Sciatic nerve (tissue), 2 donors: ENCODE measurements at regions of chr2 and their contacts with region 1.

Region 1: DNA sequence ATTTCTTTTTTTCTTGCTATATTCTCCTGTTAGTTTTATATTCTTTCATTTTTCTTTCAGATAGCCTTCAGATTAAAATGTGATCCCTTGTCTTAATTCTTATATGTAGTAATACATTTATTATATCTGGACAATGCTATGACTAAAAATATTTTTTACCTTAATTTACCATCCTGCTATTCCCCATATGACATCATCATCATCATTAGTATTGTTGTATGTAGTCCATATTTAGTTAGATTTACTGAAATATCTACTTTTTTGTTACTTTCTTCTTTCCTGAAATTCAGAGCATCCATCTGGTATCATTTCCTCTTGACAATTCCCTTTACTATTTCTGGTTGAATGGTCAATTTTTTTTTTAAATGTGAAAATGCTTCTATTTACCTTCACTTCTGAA is 951.6 kb upstream of the POU3F3 start:
- DNase-seq: no peak
- ATAC-seq: no peak

Region 2: GRCh38 chr2:103235283-103235682 is 667.1 kb before region 1 on chr2:
- intact Hi-C with region 1: loop called (anchors 5 kb)
- DNase-seq: no peak
- ATAC-seq: no peak

Region 3: DNA sequence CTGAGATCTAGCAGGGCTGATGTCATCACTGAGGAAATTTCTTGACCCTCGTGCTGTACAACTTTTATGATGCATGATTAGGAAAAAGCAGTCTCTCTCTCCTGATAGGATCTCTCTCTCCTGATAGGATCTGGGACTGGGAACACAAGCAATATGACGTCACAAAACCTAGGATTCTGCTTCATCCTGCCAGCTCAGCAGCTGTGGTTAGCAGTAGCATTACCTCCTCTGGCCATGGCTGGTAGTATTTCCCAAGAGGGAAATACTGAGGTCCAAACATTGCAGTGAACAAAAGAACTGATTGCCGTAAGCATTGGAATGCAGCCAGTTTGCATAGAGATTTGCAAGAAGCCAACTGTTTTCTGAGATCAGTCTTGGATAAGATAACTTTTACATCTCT is 430.4 kb after region 1 on chr2:
- intact Hi-C with region 1: no loop called
- DNase-seq: no peak
- ATAC-seq: no peak